B cell (primary cell): ENCODE measurements at regions of chr19 and their contacts with region 1.

Region 1: GRCh38 chr19:6424939-6425731 is 524 bp upstream of the KHSRP start:
- DNase-seq: peak; percentile 100
- ATAC-seq: peak; percentile 82
- H3K4me3 ChIP-seq: peak overlapping the region in 4 of 5 experiments; percentile 31 to 57 (median 45)
- H3K4me3 Mint-ChIP-seq: peak overlapping the region; percentile 82
- H3K27ac ChIP-seq: peak overlapping the region; percentile 84 to 93
- H3K27ac Mint-ChIP-seq: peak overlapping the region; percentile 94
- H3K4me1 ChIP-seq: peaks cover 26 to 35% of the 10 kb centered on the region in 2 donors
- H3K4me1 Mint-ChIP-seq: peaks cover 35% of the 10 kb centered on the region
- H3K27me3 ChIP-seq: no peaks in the 10 kb centered on the region
- H3K27me3 Mint-ChIP-seq: no peaks in the 10 kb centered on the region
- CTCF ChIP-seq: no peak

Region 2: GRCh38 chr19:6199240-6199983 is 225.7 kb before region 1 on chr19:
- CTCF ChIA-PET with region 1: no interaction called
- POLR2A ChIA-PET with region 1: no interaction called
- intact Hi-C with region 1: loop called (anchors 1 kb)
- DNase-seq: peak; percentile 100
- ATAC-seq: peak; percentile 88
- H3K4me3 ChIP-seq: peak overlapping the region; percentile 32 to 88 (median 72)
- H3K4me3 Mint-ChIP-seq: peak overlapping the region; percentile 99
- H3K27ac ChIP-seq: peak overlapping the region; percentile 56 to 60
- H3K27ac Mint-ChIP-seq: peak overlapping the region; percentile 89
- H3K4me1 ChIP-seq: peaks cover 17 to 34% of the 10 kb centered on the region in 2 donors
- H3K4me1 Mint-ChIP-seq: peaks cover 32% of the 10 kb centered on the region
- H3K27me3 ChIP-seq: no peaks in the 10 kb centered on the region
- H3K27me3 Mint-ChIP-seq: no peaks in the 10 kb centered on the region
- CTCF ChIP-seq: peak; percentile 57

Region 3: DNA sequence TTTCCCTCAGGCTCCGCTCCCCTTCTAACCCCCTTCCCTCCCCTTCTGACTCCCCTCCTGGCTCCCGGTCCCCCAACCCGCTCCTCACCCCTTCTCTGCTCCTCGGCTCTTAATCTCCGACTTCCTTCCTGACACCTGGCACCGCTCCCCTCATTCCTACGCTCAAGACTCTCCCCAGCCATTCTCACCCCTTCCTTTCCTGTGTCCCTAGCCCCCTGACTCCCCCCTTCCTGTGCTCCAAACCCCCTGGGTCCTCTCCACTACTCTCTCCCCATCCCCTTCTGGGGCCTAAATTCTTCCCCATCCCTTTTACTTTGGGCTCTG is 63.1 kb before region 1 on chr19:
- CTCF ChIA-PET with region 1: interaction called, 4 read pairs
- POLR2A ChIA-PET with region 1: interaction called, 5 read pairs
- intact Hi-C with region 1: loop called (anchors 1 kb)
- DNase-seq: no peak
- ATAC-seq: no peak
- H3K4me3 ChIP-seq: peak overlapping the region in 4 of 5 experiments; percentile 60 to 72 (median 66)
- H3K4me3 Mint-ChIP-seq: peak overlapping the region; percentile 94
- H3K27ac ChIP-seq: peak overlapping the region; percentile 60 to 79
- H3K27ac Mint-ChIP-seq: peak overlapping the region; percentile 92
- H3K4me1 ChIP-seq: peaks cover 6 to 12% of the 10 kb centered on the region in 2 donors
- H3K4me1 Mint-ChIP-seq: peaks cover 14% of the 10 kb centered on the region
- H3K27me3 ChIP-seq: no peaks in the 10 kb centered on the region
- H3K27me3 Mint-ChIP-seq: no peaks in the 10 kb centered on the region
- CTCF ChIP-seq: no peak

Region 4: GRCh38 chr19:6393074-6393983 is 31.8 kb before region 1 on chr19 and contains the start of gene GTF2F1:
- CTCF ChIA-PET with region 1: no interaction called
- POLR2A ChIA-PET with region 1: interaction called, 15 read pairs
- intact Hi-C with region 1: loop called (anchors 1 kb)
- DNase-seq: peak; percentile 98
- ATAC-seq: peak; percentile 82
- H3K4me3 ChIP-seq: peak within 1 kb of the TSS; percentile 70 to 91 (median 83)
- H3K4me3 Mint-ChIP-seq: peak within 1 kb of the TSS; percentile 95
- H3K27ac ChIP-seq: peak within 1 kb of the TSS; percentile 73 to 95
- H3K27ac Mint-ChIP-seq: peak within 1 kb of the TSS; percentile 97
- H3K4me1 ChIP-seq: peaks cover 15 to 16% of the 10 kb centered on the region in 2 donors
- H3K4me1 Mint-ChIP-seq: peaks cover 26% of the 10 kb centered on the region
- H3K27me3 ChIP-seq: no peaks in the 10 kb centered on the region
- H3K27me3 Mint-ChIP-seq: no peaks in the 10 kb centered on the region
- CTCF ChIP-seq: no peak
- total RNA-seq, gene GTF2F1: 56.5 and 63.4 TPM in 2 replicates

Region 5: DNA sequence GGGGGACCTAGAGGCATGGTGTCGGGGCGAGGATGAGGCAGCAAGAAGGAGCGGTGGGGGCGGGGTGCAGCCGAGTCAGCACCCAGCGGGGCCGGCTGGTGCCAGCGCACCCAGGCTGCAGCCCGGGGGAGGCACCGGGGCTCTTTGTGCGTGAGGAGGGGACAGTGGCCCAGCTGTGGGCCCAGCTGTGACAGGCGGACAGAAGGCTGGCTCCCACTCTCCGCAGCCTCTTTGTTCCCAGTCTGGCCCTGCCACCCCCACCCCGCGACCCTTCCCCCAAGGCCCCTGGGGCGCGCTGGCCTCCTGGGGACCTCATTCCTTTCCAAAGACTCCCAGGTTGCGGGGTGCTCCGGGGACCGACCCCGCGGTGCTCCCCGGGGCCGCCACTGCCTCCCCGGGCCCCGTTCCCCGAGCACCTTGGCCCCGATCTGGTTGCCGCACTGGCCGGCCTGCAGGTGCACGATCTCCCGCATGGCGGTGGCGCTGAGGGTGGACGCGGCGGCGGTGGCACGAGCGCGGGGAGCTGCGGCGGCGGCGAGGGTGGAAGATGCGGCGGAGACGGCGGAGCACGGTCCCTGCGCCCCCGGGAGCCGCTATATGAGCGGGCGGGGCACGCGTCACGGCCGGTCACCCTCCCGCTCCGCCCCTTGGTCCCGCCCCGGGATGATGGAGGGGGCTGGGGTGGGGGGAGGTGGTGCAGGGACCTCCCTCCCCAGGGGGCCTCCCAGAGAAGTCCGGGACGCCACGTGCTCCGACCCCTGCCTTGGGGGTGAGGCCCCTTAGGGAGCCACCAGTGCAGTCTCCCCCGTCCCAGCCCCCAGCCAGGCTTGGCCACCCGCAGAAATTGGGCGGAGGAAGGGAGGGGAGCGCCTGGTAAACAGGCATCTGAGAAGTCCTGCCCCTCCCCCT is 76.9 kb after region 1 on chr19 and contains the start of gene TUBB4A:
- CTCF ChIA-PET with region 1: interaction called, 6 read pairs
- POLR2A ChIA-PET with region 1: no interaction called
- intact Hi-C with region 1: loop called (anchors 2 kb)
- DNase-seq: peak; percentile 68
- ATAC-seq: peak; percentile 83
- H3K4me3 ChIP-seq: peak within 1 kb of the TSS in 4 of 5 experiments; percentile 47 to 67 (median 59)
- H3K4me3 Mint-ChIP-seq: peak within 1 kb of the TSS; percentile 92
- H3K27ac ChIP-seq: no peak within 1 kb of the TSS
- H3K27ac Mint-ChIP-seq: peak within 1 kb of the TSS; percentile 78
- H3K4me1 ChIP-seq: peaks cover 16 to 21% of the 10 kb centered on the region in 2 donors
- H3K4me1 Mint-ChIP-seq: peaks cover 18% of the 10 kb centered on the region
- H3K27me3 ChIP-seq: peaks cover 0 to 17% (median 3%) of the 10 kb centered on the region in 4 experiments
- H3K27me3 Mint-ChIP-seq: peaks cover 3% of the 10 kb centered on the region
- CTCF ChIP-seq: peak; percentile 13
- total RNA-seq, gene TUBB4A: 21.9 and 22.1 TPM in 2 replicates